Heart left ventricle (tissue), 16 donors: ENCODE measurements at regions of chr7 and their contacts with region 1.

Region 1: GRCh38 chr7:51315393-51316261 is 982 bp downstream of the COBL start:
- DNase-seq: peak in 1 of 5 donors; percentile 68
- ATAC-seq: peak; percentile 27 to 63 (median 54)
- H3K4me3 ChIP-seq: peak overlapping the region; percentile 35 to 92 (median 61)
- H3K27ac ChIP-seq: peak overlapping the region; percentile 20 to 87 (median 66)
- H3K4me1 ChIP-seq: peaks cover 0 to 29% (median 5%) of the 10 kb centered on the region in 12 donors
- H3K27me3 ChIP-seq: peaks cover 0 to 43% (median 6%) of the 10 kb centered on the region in 9 donors
- CTCF ChIP-seq: no peak
- POLR2A ChIP-seq: no peak

Region 2: DNA sequence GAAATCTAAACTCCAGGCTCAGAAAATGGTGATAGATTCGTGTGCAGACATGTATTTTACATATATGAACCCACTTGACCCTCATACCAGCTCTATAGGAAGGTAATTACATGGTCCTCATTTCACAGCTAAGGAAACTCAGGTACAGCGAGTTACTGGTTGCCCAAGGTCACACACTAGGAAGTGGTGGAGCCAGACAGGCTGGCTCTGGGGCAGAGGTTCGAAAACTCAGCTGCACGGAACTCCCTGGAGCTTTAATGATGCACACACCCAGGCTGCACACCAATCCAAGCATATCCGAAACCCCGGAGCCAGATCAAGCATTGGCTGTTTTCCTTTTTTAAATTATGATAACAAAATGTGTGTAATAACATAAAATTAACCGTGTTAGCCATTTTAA is 171.4 kb before region 1 on chr7:
- intact Hi-C with region 1: no loop called
- DNase-seq: no peak
- ATAC-seq: no peak
- H3K4me3 ChIP-seq: no peak overlapping the region
- H3K27ac ChIP-seq: no peak overlapping the region
- H3K4me1 ChIP-seq: peaks cover 2 to 38% (median 23%) of the 10 kb centered on the region in 12 donors
- H3K27me3 ChIP-seq: no peaks in the 10 kb centered on the region
- CTCF ChIP-seq: no peak
- POLR2A ChIP-seq: no peak

Region 3: DNA sequence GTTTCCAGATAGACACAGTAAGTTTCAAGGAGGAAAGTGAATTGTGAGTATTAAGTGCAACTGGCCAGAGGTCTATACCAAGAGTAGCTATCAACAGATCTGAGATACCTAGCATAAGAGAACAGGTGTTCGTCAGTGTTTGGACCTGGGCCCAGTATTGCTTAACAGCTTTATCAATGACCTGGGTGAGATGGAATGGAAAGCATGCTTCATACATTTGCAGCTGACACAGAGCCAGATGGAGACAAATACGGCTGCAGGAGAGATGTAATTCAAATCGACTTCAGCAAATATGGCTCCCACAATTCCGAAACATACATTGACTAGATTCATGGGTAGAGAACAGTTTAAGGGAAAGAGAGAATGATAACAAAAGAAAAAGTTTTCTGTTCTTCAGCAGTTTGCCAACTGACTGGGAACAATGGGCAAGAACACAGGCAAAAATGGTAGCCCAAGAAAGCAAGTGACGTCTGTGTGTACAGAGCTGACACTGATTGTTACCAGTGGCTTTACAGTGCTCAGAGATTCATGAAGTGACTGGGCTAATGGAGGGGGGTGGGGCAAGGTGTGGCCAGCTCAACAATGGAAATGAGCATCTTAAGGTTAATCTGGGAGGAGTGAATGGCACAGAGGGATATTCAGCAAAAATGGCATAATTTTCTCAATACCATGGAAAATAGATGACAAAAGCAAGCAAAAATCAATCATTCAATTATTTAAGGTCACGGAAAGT is 28.9 kb after region 1 on chr7:
- intact Hi-C with region 1: loop called in 1 of 10 experiments (anchors 2 kb)
- DNase-seq: no peak
- ATAC-seq: peak in 3 of 4 donors; percentile 43 to 59 (median 48)
- H3K4me3 ChIP-seq: no peak overlapping the region
- H3K27ac ChIP-seq: no peak overlapping the region
- H3K4me1 ChIP-seq: peaks cover 0 to 5% (median 0%) of the 10 kb centered on the region in 12 donors
- H3K27me3 ChIP-seq: no peaks in the 10 kb centered on the region
- CTCF ChIP-seq: no peak
- POLR2A ChIP-seq: no peak

Region 4: GRCh38 chr7:51350200-51350921 is 34.7 kb after region 1 on chr7:
- intact Hi-C with region 1: loop called in 1 of 10 experiments (anchors 5 kb)
- DNase-seq: no peak
- ATAC-seq: peak; percentile 82 to 92 (median 88)
- H3K4me3 ChIP-seq: no peak overlapping the region
- H3K27ac ChIP-seq: peak overlapping the region in 4 of 12 donors; percentile 16 to 33 (median 22)
- H3K4me1 ChIP-seq: peaks cover 0 to 10% (median 0%) of the 10 kb centered on the region in 12 donors
- H3K27me3 ChIP-seq: no peaks in the 10 kb centered on the region
- CTCF ChIP-seq: no peak
- POLR2A ChIP-seq: no peak

Region 5: GRCh38 chr7:51426163-51426562 is 110.5 kb after region 1 on chr7:
- intact Hi-C with region 1: no loop called
- DNase-seq: no peak
- ATAC-seq: no peak
- H3K4me3 ChIP-seq: no peak overlapping the region
- H3K27ac ChIP-seq: no peak overlapping the region
- H3K4me1 ChIP-seq: peaks cover 0 to 2% (median 0%) of the 10 kb centered on the region in 12 donors
- H3K27me3 ChIP-seq: peaks cover 0 to 21% (median 0%) of the 10 kb centered on the region in 9 donors
- CTCF ChIP-seq: no peak
- POLR2A ChIP-seq: no peak